ENCODE measurements at regions of chr17 and their contacts with region 1.

Region 1: DNA sequence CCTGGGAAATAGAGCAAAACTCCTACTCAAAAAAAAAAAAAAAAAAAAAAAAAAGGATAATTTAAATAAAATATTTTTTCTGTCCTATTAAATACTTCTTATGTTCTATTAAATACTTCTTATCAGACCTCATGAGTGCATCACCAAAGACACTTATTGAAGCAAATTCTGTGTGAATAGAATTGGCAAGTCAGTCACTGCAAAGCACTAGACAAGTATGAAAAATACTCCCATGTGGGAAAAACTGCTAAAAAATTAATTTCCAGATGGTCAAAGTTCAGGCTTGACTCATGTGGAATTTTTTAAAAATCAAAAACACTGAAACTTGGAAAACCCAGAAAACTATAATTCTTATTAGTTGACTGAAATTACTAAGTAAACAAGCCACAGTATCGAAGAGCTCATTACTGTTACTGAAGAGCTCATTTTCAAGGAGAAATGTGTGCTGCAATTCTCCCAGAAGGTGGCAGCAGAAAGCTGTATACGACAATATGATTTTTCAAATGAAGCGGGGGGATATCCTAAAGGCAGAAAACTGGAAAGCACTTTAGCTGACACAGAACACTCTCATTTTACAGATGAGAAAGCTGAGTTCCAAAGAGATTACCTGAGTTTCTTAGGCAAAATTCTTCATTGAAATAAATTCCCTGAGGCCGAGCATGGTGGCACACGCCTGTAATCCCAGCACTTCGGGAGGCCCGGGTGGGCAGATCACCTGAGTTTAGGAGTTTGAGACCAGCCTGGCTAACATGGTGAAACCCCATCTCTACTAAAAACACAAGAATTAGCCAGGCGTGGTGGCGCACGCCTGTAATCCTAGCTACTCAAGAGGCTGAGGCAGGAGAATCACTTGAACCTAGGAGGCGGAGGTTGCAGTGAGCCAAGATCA is 15.9 kb upstream of the FBXO47 start:
- DNase-seq: peak; percentile 13 to 55
- H3K4me3 ChIP-seq: no peak overlapping the region
- H3K27ac ChIP-seq: no peak overlapping the region
- H3K4me1 ChIP-seq: no peaks in the 10 kb centered on the region
- H3K27me3 ChIP-seq: no peaks in the 10 kb centered on the region
- CTCF ChIP-seq: peak in 2 of 3 experiments; percentile 79; a peak in 3 of 4 replicates
- EP300 ChIP-seq: no peak
- POLR2A ChIP-seq: no peak
- RAD21 ChIP-seq: peak; percentile 90 to 91

Region 2: GRCh38 chr17:38663125-38663751 is 319.9 kb before region 1 on chr17:
- CTCF ChIA-PET with region 1: no interaction called
- POLR2A ChIA-PET with region 1: no interaction called
- DNase-seq: peak; percentile 83 to 90
- H3K4me3 ChIP-seq: no peak overlapping the region
- H3K27ac ChIP-seq: no peak overlapping the region
- H3K4me1 ChIP-seq: peaks cover 0 to 5% (median 2%) of the 10 kb centered on the region in 4 experiments; a peak in 4 of 7 replicates
- H3K27me3 ChIP-seq: peaks cover 3 to 12% (median 8%) of the 10 kb centered on the region in 4 experiments
- CTCF ChIP-seq: peak; percentile 96 to 100 (median 99)
- EP300 ChIP-seq: no peak; a peak in 1 of 3 replicates
- POLR2A ChIP-seq: no peak
- RAD21 ChIP-seq: peak; percentile 83 to 96

Region 3: GRCh38 chr17:38914741-38915643 is 68.1 kb before region 1 on chr17:
- CTCF ChIA-PET with region 1: no interaction called
- POLR2A ChIA-PET with region 1: no interaction called
- DNase-seq: no peak
- H3K4me3 ChIP-seq: no peak overlapping the region
- H3K27ac ChIP-seq: no peak overlapping the region
- H3K4me1 ChIP-seq: no peaks in the 10 kb centered on the region; a peak in 1 of 7 replicates
- H3K27me3 ChIP-seq: no peaks in the 10 kb centered on the region
- CTCF ChIP-seq: peak; percentile 30 to 50 (median 42)
- EP300 ChIP-seq: no peak
- POLR2A ChIP-seq: no peak
- RAD21 ChIP-seq: peak in 1 of 2 experiments; percentile 43; a peak in 2 of 4 replicates

Region 4: DNA sequence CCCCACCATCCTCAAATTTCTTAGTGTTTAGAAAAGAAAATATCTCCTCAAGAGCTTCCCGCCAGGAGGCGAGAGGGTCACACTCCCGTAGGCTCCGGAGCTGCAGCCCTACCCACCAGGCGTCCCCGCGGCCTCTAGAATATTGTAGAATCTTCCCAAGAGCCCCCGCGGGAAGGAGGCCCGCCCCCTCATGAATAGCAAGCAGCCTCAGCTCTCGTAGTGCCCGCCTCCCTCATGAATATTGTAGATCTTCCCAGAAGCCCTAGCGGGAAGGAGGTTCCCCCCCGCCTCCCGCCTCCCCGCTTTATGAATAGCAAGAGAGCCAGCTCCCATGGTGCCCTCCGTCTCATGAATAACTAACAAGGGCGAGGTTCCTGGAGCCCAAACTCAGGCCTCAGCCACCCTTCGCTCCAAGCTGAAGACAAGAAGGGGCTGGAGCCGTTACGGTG is 15.8 kb before region 1 on chr17 and contains the start of gene FBXO47:
- CTCF ChIA-PET with region 1: interaction called, 12 read pairs
- POLR2A ChIA-PET with region 1: interaction called, 3 read pairs
- DNase-seq: peak; percentile 92 to 94
- H3K4me3 ChIP-seq: peak within 1 kb of the TSS in 3 of 4 experiments; percentile 5 to 47 (median 23); a peak in 5 of 8 replicates
- H3K27ac ChIP-seq: peak within 1 kb of the TSS; percentile 71
- H3K4me1 ChIP-seq: peaks cover 0 to 2% (median 1%) of the 10 kb centered on the region in 4 experiments; a peak in 3 of 7 replicates
- H3K27me3 ChIP-seq: no peaks in the 10 kb centered on the region
- CTCF ChIP-seq: peak in 2 of 3 experiments; percentile 24 to 26; a peak in 2 of 4 replicates
- EP300 ChIP-seq: no peak
- POLR2A ChIP-seq: peak; percentile 34 to 64; a peak in 2 of 3 replicates
- RAD21 ChIP-seq: peak; percentile 34 to 47; a peak in 3 of 4 replicates
- total RNA-seq, gene FBXO47: not detected in 2 replicates

Region 5: GRCh38 chr17:39018267-39019134 is 35.4 kb after region 1 on chr17:
- CTCF ChIA-PET with region 1: interaction called, 12 read pairs
- POLR2A ChIA-PET with region 1: no interaction called
- DNase-seq: no peak
- H3K4me3 ChIP-seq: no peak overlapping the region
- H3K27ac ChIP-seq: no peak overlapping the region
- H3K4me1 ChIP-seq: no peaks in the 10 kb centered on the region; a peak in 1 of 7 replicates
- H3K27me3 ChIP-seq: no peaks in the 10 kb centered on the region
- CTCF ChIP-seq: no peak
- EP300 ChIP-seq: no peak
- POLR2A ChIP-seq: no peak
- RAD21 ChIP-seq: no peak

Region 6: GRCh38 chr17:39069114-39069756 is 86.1 kb after region 1 on chr17:
- CTCF ChIA-PET with region 1: interaction called, 49 read pairs
- POLR2A ChIA-PET with region 1: no interaction called
- DNase-seq: no peak
- H3K4me3 ChIP-seq: no peak overlapping the region
- H3K27ac ChIP-seq: no peak overlapping the region
- H3K4me1 ChIP-seq: peaks cover 0 to 10% (median 4%) of the 10 kb centered on the region in 4 experiments; a peak in 5 of 7 replicates
- H3K27me3 ChIP-seq: no peaks in the 10 kb centered on the region
- CTCF ChIP-seq: peak; percentile 26 to 85 (median 69)
- EP300 ChIP-seq: no peak
- POLR2A ChIP-seq: no peak
- RAD21 ChIP-seq: peak; percentile 72 to 82

Region 7: DNA sequence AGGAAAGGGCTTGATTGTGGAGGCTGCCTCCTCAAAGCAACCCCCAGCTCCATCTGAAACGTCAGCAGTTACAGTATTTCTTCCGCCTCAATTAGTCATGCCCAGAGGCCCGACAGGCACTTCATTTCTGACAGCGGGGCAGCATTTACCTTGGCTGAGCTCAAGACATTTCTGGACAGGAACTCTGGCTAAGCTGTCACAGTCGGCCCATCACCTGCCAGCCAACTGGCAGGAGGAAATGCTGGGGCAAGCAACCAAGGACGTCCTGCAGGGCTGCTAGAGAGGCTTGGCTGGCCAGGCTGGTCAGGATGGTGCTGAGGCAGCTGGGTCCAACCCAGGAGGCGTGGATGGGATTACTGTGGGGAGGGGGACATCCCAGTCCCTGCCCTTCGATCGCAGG is 140.5 kb after region 1 on chr17:
- CTCF ChIA-PET with region 1: interaction called, 13 read pairs
- POLR2A ChIA-PET with region 1: no interaction called
- DNase-seq: no peak
- H3K4me3 ChIP-seq: no peak overlapping the region
- H3K27ac ChIP-seq: no peak overlapping the region
- H3K4me1 ChIP-seq: no peaks in the 10 kb centered on the region
- H3K27me3 ChIP-seq: no peaks in the 10 kb centered on the region
- CTCF ChIP-seq: no peak
- EP300 ChIP-seq: no peak
- POLR2A ChIP-seq: no peak
- RAD21 ChIP-seq: no peak

Measured in H1 (cell line).